CD8-positive, alpha-beta T cell (primary cell): ENCODE measurements at regions of chr12 and their contacts with region 1.

Region 1: GRCh38 chr12:31966558-31967205 is 7.5 kb downstream of the RESF1 start:
- DNase-seq: peak in 2 of 9 experiments; percentile 33 to 45
- ATAC-seq: no peak
- H3K4me3 ChIP-seq: peak overlapping the region; percentile 16 to 40
- H3K4me3 Mint-ChIP-seq: peak overlapping the region; percentile 84
- H3K27ac ChIP-seq: peak overlapping the region; percentile 22 to 73
- H3K27ac Mint-ChIP-seq: peak overlapping the region; percentile 95
- H3K4me1 ChIP-seq: peaks cover 92% of the 10 kb centered on the region
- H3K4me1 Mint-ChIP-seq: peaks cover 91% of the 10 kb centered on the region
- H3K27me3 ChIP-seq: no peaks in the 10 kb centered on the region
- H3K27me3 Mint-ChIP-seq: no peaks in the 10 kb centered on the region
- CTCF ChIP-seq: no peak

Region 2: DNA sequence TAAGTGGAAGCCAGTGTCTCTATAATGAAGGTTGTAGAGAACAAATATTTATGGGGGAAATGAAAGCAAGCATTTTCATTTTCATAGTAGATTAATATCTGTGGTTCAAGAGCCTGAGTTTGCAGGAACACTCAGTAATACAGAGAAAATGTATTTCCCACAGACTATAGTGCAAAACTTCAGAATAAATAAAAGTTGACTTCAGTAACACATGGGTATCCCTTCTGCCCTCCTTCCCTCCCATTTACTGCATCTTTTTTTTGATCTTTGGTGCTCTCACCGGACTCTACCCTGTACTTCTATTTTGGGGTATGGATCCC is 162.5 kb before region 1 on chr12:
- CTCF ChIA-PET with region 1: no interaction called
- POLR2A ChIA-PET with region 1: interaction called, 4 read pairs
- intact Hi-C with region 1: loop called in 1 of 2 experiments (anchors 5 kb)
- DNase-seq: peak in 1 of 9 experiments; percentile 16
- ATAC-seq: no peak
- H3K4me3 ChIP-seq: peak overlapping the region; percentile 33 to 56
- H3K4me3 Mint-ChIP-seq: peak overlapping the region; percentile 94
- H3K27ac ChIP-seq: peak overlapping the region; percentile 34 to 68
- H3K27ac Mint-ChIP-seq: peak overlapping the region; percentile 97
- H3K4me1 ChIP-seq: peaks cover 33% of the 10 kb centered on the region
- H3K4me1 Mint-ChIP-seq: peaks cover 55% of the 10 kb centered on the region
- H3K27me3 ChIP-seq: no peaks in the 10 kb centered on the region
- H3K27me3 Mint-ChIP-seq: no peaks in the 10 kb centered on the region
- CTCF ChIP-seq: no peak

Region 3: GRCh38 chr12:31890295-31891285 is 76.1 kb before region 1 on chr12:
- CTCF ChIA-PET with region 1: interaction called, 15 read pairs
- POLR2A ChIA-PET with region 1: interaction called, 56 read pairs
- intact Hi-C with region 1: loop called in 1 of 2 experiments (anchors 2 kb)
- DNase-seq: peak in 3 of 9 experiments; percentile 16 to 81 (median 64)
- ATAC-seq: peak; percentile 89
- H3K4me3 ChIP-seq: no peak overlapping the region
- H3K4me3 Mint-ChIP-seq: peak overlapping the region; percentile 51
- H3K27ac ChIP-seq: peak overlapping the region; percentile 19 to 66
- H3K27ac Mint-ChIP-seq: peak overlapping the region; percentile 90
- H3K4me1 ChIP-seq: peaks cover 70% of the 10 kb centered on the region
- H3K4me1 Mint-ChIP-seq: peaks cover 60% of the 10 kb centered on the region
- H3K27me3 ChIP-seq: no peaks in the 10 kb centered on the region
- H3K27me3 Mint-ChIP-seq: no peaks in the 10 kb centered on the region
- CTCF ChIP-seq: no peak

Region 4: GRCh38 chr12:31989571-31990362 is 23.1 kb after region 1 on chr12:
- CTCF ChIA-PET with region 1: interaction called, 5 read pairs
- POLR2A ChIA-PET with region 1: interaction called, 4 read pairs
- intact Hi-C with region 1: loop called in 1 of 2 experiments (anchors 2 kb)
- DNase-seq: peak in 1 of 9 experiments; percentile 42
- ATAC-seq: no peak
- H3K4me3 ChIP-seq: no peak overlapping the region
- H3K4me3 Mint-ChIP-seq: no peak overlapping the region
- H3K27ac ChIP-seq: no peak overlapping the region
- H3K27ac Mint-ChIP-seq: peak overlapping the region; percentile 58
- H3K4me1 ChIP-seq: no peaks in the 10 kb centered on the region
- H3K4me1 Mint-ChIP-seq: peaks cover 40% of the 10 kb centered on the region
- H3K27me3 ChIP-seq: no peaks in the 10 kb centered on the region
- H3K27me3 Mint-ChIP-seq: no peaks in the 10 kb centered on the region
- CTCF ChIP-seq: no peak

Region 5: GRCh38 chr12:32002848-32003493 is 36.3 kb after region 1 on chr12:
- CTCF ChIA-PET with region 1: interaction called, 3 read pairs
- POLR2A ChIA-PET with region 1: no interaction called
- intact Hi-C with region 1: loop called in 1 of 2 experiments (anchors 5 kb)
- DNase-seq: no peak
- ATAC-seq: no peak
- H3K4me3 ChIP-seq: no peak overlapping the region
- H3K4me3 Mint-ChIP-seq: no peak overlapping the region
- H3K27ac ChIP-seq: peak overlapping the region in 1 of 2 experiments; percentile 46
- H3K27ac Mint-ChIP-seq: peak overlapping the region; percentile 46
- H3K4me1 ChIP-seq: no peaks in the 10 kb centered on the region
- H3K4me1 Mint-ChIP-seq: peaks cover 12% of the 10 kb centered on the region
- H3K27me3 ChIP-seq: no peaks in the 10 kb centered on the region
- H3K27me3 Mint-ChIP-seq: no peaks in the 10 kb centered on the region
- CTCF ChIP-seq: no peak

Region 6: DNA sequence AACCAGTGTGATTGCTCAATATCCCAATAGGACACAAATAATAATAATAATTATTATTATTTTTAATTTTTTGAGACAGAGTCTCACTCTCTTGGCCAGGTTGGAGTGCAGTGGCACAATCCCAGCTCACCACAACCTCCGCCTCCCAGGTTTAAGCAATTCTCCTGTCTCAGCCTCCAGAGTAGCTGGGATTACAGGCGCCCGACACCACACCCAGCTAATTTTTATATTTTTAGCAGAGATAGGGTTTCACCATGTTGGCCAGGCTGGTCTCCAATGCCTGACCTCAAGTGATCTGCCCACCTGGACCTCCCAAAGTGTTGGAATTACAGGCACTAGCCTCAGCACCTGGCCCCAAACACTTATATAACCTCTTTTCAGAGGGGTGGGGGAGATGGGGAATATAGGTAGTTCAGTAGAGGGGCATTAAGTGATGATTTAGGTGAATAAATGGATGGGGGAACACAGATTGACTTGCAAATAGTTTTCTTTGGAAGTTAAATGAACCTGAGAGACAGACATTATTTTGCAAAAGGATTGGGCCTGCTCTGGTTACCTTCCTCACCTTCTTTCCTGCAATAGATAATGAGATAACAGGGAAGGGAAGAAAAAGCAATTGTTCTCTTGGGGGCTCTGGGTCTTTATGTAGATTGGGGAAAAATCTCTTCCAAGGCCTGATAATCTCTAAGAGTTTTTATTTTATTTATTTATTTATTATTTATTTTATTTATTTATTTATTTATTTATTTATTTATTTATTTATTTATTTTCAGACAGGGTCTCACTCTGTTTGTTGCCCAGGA is 50.2 kb after region 1 on chr12:
- CTCF ChIA-PET with region 1: no interaction called
- POLR2A ChIA-PET with region 1: no interaction called
- intact Hi-C with region 1: no loop called
- DNase-seq: no peak
- ATAC-seq: no peak
- H3K4me3 ChIP-seq: no peak overlapping the region
- H3K4me3 Mint-ChIP-seq: no peak overlapping the region
- H3K27ac ChIP-seq: no peak overlapping the region
- H3K27ac Mint-ChIP-seq: no peak overlapping the region
- H3K4me1 ChIP-seq: peaks cover 6% of the 10 kb centered on the region
- H3K4me1 Mint-ChIP-seq: peaks cover 9% of the 10 kb centered on the region
- H3K27me3 ChIP-seq: no peaks in the 10 kb centered on the region
- H3K27me3 Mint-ChIP-seq: no peaks in the 10 kb centered on the region
- CTCF ChIP-seq: no peak

Region 7: DNA sequence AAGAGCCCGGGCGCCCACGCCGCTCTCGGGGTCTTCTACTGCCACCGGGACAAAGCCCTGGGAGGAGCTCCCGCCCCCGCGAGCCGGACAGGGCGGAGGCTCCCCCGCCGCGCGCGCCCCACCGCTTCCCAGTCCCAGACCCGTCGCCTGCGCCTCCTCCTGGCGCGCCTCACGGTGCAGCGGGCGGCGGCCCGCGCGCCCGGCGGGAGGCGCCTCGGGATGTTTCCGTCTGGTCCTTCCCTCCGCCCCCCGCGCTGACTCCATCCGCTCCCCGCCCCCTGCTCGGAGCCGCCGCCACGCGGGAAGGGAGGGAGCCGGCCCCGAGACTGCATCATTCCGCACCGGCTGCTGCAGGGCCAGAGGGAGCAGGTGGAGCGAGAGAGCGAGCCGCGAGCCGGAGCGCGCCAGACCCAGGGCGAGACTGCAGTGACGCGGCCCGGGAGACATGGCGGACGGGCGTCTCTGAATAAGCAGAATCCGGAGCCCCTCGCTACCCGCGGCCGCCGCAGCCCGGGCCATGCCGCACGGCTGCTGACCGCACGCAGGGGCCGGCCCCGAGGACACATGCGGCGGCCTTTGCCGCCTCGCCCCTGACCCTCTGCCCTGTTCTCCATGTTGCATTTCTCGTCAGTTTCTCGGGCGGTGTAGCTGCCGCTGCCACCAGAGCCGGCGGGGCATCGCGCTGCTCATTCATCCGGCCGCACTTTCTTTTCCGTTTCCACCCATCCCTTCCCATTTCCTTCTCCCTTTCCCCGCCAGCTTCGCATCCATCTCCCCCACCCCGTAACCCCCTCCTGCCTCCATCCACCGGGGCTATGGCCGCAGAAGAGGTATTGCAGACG is 140.1 kb after region 1 on chr12 and contains the start of gene BICD1:
- CTCF ChIA-PET with region 1: no interaction called
- POLR2A ChIA-PET with region 1: no interaction called
- intact Hi-C with region 1: loop called in 1 of 2 experiments (anchors 5 kb)
- DNase-seq: peak; percentile 32 to 85 (median 74)
- ATAC-seq: peak; percentile 85
- H3K4me3 ChIP-seq: peak within 1 kb of the TSS; percentile 55 to 84
- H3K4me3 Mint-ChIP-seq: peak within 1 kb of the TSS; percentile 88
- H3K27ac ChIP-seq: peak within 1 kb of the TSS; percentile 16 to 61
- H3K27ac Mint-ChIP-seq: peak within 1 kb of the TSS; percentile 88
- H3K4me1 ChIP-seq: peaks cover 17% of the 10 kb centered on the region
- H3K4me1 Mint-ChIP-seq: peaks cover 30% of the 10 kb centered on the region
- H3K27me3 ChIP-seq: no peaks in the 10 kb centered on the region
- H3K27me3 Mint-ChIP-seq: no peaks in the 10 kb centered on the region
- CTCF ChIP-seq: peak; percentile 17
- total RNA-seq, gene BICD1: 7.0 to 7.2 TPM